Panc1 (cell line): ENCODE measurements at regions of chr16 and their contacts with region 1.

Region 1: DNA sequence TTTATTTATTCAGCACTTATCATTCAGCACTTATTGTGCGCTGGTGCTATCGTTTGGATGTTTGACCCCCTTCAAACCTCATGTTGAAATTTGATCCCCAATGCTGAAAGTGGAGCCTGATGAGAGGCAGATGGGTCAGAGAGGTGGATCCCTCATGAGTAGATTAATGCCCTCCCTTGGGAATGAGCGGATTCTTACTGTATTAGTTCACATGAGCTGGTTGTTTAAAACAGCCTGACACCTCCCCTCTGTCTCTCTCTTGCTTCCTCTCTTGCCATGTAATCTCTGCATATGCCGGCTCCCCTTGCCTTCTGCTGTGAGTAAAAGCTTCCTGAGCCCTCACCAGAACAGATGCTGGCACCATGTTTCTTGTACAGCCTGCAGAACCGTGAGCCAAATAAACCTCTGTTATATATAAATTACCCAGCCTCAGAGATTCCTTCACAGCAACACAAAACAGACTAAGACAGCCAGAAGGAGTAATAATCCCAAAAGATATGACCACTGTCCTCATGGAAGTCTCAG is 111.1 kb downstream of the CACNG3 start:
- DNase-seq: no peak
- ATAC-seq: no peak
- H3K4me3 ChIP-seq: no peak overlapping the region
- H3K27ac ChIP-seq: no peak overlapping the region
- H3K4me1 ChIP-seq: no peaks in the 10 kb centered on the region
- H3K27me3 ChIP-seq: peaks cover 13% of the 10 kb centered on the region
- CTCF ChIP-seq: no peak

Region 2: DNA sequence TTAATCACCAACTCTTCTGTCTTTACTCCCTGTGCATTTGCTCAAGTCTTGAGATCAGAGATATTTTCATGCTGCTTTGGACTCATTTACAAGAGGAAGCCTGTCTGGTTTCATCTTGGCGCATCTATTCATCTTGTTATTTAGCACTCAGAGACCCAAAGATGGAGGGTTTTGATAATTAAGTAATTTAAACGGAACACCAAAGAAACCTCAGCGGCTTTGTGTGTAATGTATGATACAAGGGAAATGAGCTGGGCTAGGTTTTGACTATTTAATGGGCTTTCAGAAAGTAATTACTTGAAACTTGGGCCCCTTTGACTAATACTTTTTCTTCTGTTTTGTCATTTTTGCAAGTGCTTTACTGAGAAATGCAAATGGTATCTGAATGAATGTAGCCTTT is 177.3 kb before region 1 on chr16:
- CTCF ChIA-PET with region 1: no interaction called
- POLR2A ChIA-PET with region 1: no interaction called
- in situ Hi-C with region 1: no loop called
- intact Hi-C with region 1: no loop called
- DNase-seq: no peak
- ATAC-seq: no peak
- H3K4me3 ChIP-seq: no peak overlapping the region
- H3K27ac ChIP-seq: no peak overlapping the region
- H3K4me1 ChIP-seq: no peaks in the 10 kb centered on the region
- H3K27me3 ChIP-seq: peaks cover 18% of the 10 kb centered on the region
- CTCF ChIP-seq: no peak

Region 3: DNA sequence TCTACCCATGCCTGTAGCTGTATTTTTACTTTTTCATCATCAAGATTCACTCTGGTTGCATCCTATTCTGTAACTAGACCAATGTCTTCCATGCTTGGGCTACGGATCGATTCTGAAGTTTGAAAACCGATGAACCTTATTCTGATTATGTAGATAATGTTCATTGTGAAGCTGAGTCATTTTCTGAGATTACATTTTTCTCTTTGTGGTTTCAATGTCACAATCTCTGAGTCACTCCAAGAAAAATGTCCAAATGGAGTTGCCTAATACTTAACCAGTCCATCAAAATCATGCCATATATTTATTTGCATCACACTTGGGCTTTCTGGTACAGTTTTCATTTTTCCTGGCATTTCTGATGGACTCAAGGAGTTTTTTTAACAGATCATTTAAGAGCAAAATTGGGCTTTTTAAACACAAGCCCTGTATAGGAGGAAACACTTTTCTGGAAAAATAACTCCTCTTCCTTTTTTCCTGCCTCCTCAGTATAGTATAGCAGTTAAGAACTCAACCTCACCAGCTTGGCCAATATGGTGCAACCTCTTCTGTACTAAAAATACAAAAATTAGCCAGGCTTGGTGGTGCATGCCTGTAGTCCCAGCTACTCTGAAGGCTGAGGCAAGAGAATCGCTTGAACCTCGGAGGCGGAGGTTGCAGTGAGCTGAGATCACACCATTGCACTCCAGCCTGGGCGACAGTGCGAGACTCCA is 93.6 kb before region 1 on chr16:
- CTCF ChIA-PET with region 1: no interaction called
- POLR2A ChIA-PET with region 1: interaction called, 13 read pairs
- in situ Hi-C with region 1: no loop called
- intact Hi-C with region 1: no loop called
- DNase-seq: no peak
- ATAC-seq: no peak
- H3K4me3 ChIP-seq: no peak overlapping the region
- H3K27ac ChIP-seq: no peak overlapping the region
- H3K4me1 ChIP-seq: no peaks in the 10 kb centered on the region
- H3K27me3 ChIP-seq: peaks cover 21% of the 10 kb centered on the region
- CTCF ChIP-seq: no peak